GM10248 (cell line): ENCODE measurements at regions of chr15 and their contacts with region 1.

Region 1: DNA sequence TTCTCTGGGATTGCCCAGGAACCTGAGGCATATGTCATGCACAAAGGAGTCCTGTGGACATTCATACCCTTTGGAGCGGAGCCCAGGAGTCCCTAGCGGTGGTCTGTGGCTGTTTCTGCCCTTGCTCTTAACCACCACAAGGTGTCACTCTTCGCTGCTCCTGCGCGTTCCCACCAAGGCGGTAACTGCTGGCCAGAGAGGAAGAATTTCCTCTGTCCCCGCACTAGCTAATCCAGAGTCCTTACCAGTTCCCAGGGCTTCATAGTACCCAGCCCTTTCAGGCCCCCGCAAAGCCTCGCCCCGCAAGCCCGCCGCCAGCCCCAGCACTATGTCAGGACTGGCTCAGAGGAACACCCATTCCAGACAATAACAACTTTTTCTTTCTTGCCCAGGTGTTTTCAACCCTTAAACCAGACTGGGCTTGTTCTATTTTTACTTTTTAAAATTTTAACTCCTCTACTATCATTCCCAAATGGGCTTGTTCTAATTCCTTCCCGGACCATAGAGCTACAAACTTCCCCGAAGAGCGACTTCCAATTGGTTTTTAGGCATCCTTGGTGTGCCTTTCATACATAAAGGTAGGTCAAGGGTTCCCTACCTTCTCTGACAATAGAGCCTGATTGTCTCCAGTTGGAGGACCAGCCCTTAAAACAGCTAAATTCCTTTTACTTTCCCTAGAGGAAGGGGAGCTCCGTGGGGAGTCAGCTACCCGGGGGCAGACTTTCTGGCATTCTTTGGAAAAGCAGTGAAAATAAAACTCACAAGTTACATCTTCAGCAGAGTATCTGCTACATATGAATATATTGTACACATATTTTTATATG is 31.8 kb upstream of the ZNF774 start:
- DNase-seq: peak; percentile 87
- CTCF ChIP-seq: peak; percentile 95

Region 2: GRCh38 chr15:90184786-90185569 is 135.3 kb before region 1 on chr15:
- CTCF ChIA-PET with region 1: no interaction called
- POLR2A ChIA-PET with region 1: no interaction called
- DNase-seq: peak; percentile 87
- CTCF ChIP-seq: no peak

Region 3: GRCh38 chr15:90211431-90212143 is 108.7 kb before region 1 on chr15:
- CTCF ChIA-PET with region 1: no interaction called
- POLR2A ChIA-PET with region 1: no interaction called
- DNase-seq: no peak
- CTCF ChIP-seq: no peak

Region 4: GRCh38 chr15:90291679-90292356 is 28.5 kb before region 1 on chr15:
- CTCF ChIA-PET with region 1: interaction called, 25 read pairs
- POLR2A ChIA-PET with region 1: no interaction called
- DNase-seq: peak; percentile 32
- CTCF ChIP-seq: no peak

Region 5: DNA sequence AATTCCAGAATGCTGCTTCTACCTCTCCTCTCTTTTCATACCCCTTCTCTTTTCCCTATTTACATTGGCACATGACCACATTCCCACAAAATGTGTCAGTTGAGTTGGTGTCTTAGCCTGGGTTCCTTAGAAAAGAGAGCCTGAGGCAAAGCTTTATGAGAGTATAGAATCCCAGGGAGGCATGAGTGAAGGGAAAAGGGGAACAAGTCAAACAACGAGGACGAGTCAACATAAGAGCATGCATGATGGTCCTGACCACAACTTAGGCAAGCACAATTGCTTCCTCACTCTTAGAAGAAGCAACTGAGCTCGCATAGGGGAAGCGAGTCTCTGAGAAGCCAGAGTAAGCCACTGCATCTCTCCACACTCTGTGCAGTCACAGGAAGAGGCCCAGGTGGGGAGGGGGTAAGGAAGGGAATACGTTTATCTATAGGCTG is 16.4 kb after region 1 on chr15:
- CTCF ChIA-PET with region 1: interaction called, 47 read pairs
- POLR2A ChIA-PET with region 1: no interaction called
- DNase-seq: no peak
- CTCF ChIP-seq: no peak

Region 6: GRCh38 chr15:90362936-90363212 is 42.6 kb after region 1 on chr15:
- CTCF ChIA-PET with region 1: interaction called, 29 read pairs
- POLR2A ChIA-PET with region 1: no interaction called
- DNase-seq: no peak
- CTCF ChIP-seq: no peak

Region 7: DNA sequence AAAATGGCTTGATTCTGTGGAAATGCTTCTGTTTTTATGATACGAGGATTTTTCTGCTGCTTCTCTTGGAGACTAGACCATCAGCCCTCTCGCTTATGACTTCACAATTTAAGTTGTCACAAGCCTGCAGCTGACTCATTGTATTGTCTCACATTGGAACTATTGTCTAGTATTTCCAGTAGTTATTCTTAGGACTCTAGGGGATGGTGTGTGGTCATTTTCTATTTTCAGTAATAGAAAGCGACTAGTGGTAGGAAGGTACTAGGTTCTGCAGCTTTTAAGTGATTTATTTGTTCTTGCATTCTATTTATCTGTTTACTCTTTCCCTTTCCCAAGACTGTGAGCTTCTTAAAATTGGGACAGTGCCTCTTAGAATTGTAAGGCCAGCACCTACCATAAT is 143.1 kb after region 1 on chr15:
- CTCF ChIA-PET with region 1: interaction called, 20 read pairs
- POLR2A ChIA-PET with region 1: no interaction called
- DNase-seq: peak; percentile 52
- CTCF ChIP-seq: no peak

Region 8: GRCh38 chr15:90512981-90513380 is 192.7 kb after region 1 on chr15:
- CTCF ChIA-PET with region 1: interaction called, 12 read pairs
- POLR2A ChIA-PET with region 1: no interaction called
- DNase-seq: no peak
- CTCF ChIP-seq: no peak

Region 9: DNA sequence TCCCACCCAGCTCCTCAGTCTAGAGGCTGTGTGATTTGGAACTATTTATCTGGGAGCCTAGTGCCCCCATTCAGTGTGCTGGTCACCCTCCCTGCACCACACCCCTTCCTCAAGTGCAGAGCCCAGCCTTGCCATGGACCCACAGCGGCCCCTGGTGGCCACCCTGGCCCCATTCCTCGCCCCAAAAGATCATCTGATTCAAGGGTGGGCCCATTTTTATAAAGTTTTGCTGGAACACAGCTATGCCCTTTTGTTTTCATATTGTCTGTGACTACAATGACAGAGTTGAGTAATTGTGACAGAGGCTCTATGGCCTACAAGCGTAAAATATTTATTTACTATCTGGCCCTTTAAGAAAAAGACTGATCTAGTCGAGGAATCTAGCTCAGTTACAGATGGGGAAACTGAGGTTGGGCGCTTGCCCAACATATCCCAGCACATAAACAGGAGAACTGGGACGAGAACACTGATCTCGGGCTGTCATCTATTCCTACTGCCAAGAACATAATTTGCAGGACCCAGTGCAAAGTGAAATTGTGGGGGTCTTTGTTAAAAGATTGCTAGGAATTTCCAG is 565.9 kb after region 1 on chr15:
- CTCF ChIA-PET with region 1: interaction called, 39 read pairs
- POLR2A ChIA-PET with region 1: no interaction called
- DNase-seq: peak; percentile 80
- CTCF ChIP-seq: peak; percentile 90